HCT116 (cell line): ENCODE measurements at regions of chr20 and their contacts with region 1.

Region 1: GRCh38 chr20:32652739-32653526 is 20.8 kb downstream of the C20orf203 start:
- DNase-seq: peak; percentile 54
- ATAC-seq: peak; percentile 96
- H3K4me3 ChIP-seq: no peak overlapping the region
- H3K27ac ChIP-seq: no peak overlapping the region
- H3K4me1 ChIP-seq: peaks cover 0 to 11% of the 10 kb centered on the region in 2 experiments; a peak in 1 of 4 replicates
- H3K27me3 ChIP-seq: no peaks in the 10 kb centered on the region
- CTCF ChIP-seq: peak; percentile 87 to 91 (median 88)
- POLR2A ChIP-seq: no peak
- RAD21 ChIP-seq: peak; percentile 99

Region 2: GRCh38 chr20:32207626-32208498 is 445.1 kb before region 1 on chr20 and contains the starts of genes PLAGL2 and POFUT1:
- CTCF ChIA-PET with region 1: no interaction called
- POLR2A ChIA-PET with region 1: no interaction called
- RAD21 ChIA-PET with region 1: no interaction called
- intact Hi-C with region 1: loop called (anchors 5 kb)
- DNase-seq: peak; percentile 61
- ATAC-seq: peak; percentile 99
- H3K4me3 ChIP-seq: peak within 1 kb of the TSS; percentile 68 to 100
- H3K27ac ChIP-seq: peak within 1 kb of the TSS; percentile 89
- H3K4me1 ChIP-seq: peaks cover 6 to 27% of the 10 kb centered on the region in 2 experiments; a peak in 3 of 4 replicates
- H3K27me3 ChIP-seq: no peaks in the 10 kb centered on the region
- CTCF ChIP-seq: no peak
- POLR2A ChIP-seq: no peak
- RAD21 ChIP-seq: no peak
- total RNA-seq, gene PLAGL2: 18.3 TPM
- total RNA-seq, gene POFUT1: 34.5 TPM

Region 3: GRCh38 chr20:32336918-32337347 is 316.0 kb before region 1 on chr20:
- CTCF ChIA-PET with region 1: no interaction called
- POLR2A ChIA-PET with region 1: no interaction called
- RAD21 ChIA-PET with region 1: no interaction called
- intact Hi-C with region 1: loop called (anchors 10 kb)
- DNase-seq: no peak
- ATAC-seq: peak; percentile 72
- H3K4me3 ChIP-seq: no peak overlapping the region
- H3K27ac ChIP-seq: no peak overlapping the region
- H3K4me1 ChIP-seq: peaks cover 8 to 15% of the 10 kb centered on the region in 2 experiments
- H3K27me3 ChIP-seq: no peaks in the 10 kb centered on the region
- CTCF ChIP-seq: peak; percentile 25 to 56 (median 51); a peak in 5 of 6 replicates
- POLR2A ChIP-seq: no peak
- RAD21 ChIP-seq: peak; percentile 50

Region 4: DNA sequence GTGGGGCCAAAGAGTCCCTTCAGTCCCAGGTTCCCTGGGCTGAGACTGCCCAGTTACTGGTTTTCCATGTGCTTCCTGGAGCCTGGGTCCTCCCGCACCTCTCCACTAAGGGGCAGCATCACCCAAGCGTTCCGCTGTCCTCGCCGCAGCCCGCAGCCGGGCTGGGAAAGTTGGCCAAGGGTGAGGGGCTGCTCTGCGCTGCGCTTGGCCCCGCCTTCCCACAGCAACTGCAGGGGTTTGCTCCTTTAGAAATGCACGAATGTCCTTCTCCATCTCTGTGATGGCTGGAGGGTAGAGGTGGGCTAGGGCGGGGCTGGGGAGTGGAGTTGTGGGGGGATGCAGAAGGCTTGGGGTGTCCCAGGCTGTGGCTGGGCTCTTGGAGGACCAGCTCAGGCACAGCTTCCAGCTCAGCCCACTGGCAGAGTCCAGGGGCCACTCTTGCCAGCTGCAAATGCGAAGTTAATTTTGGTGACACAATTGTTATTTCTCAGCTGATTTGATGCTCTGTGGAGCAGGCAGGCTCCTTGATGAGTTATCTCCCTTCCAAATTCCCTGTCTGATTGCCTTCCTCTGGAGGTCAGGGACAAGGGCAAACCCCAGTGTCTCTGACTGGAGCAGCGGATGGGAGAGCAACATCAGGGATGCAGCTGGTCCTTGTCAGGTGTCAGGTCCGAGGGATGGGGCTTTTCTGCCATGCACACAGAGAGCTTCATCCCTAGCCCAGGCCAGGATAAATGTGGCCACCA is 131.0 kb before region 1 on chr20:
- CTCF ChIA-PET with region 1: interaction called, 117 read pairs
- POLR2A ChIA-PET with region 1: interaction called, 3 read pairs
- RAD21 ChIA-PET with region 1: interaction called, 16 to 29 read pairs
- intact Hi-C with region 1: loop called (anchors 1 kb)
- DNase-seq: peak; percentile 15
- ATAC-seq: peak; percentile 97
- H3K4me3 ChIP-seq: no peak overlapping the region
- H3K27ac ChIP-seq: no peak overlapping the region
- H3K4me1 ChIP-seq: 0 out of 4 replicates have a peak, but pooled peaks cover 0 to 3% of the 10 kb centered on the region in 2 experiments
- H3K27me3 ChIP-seq: no peaks in the 10 kb centered on the region
- CTCF ChIP-seq: peak; percentile 86 to 93 (median 88)
- POLR2A ChIP-seq: no peak
- RAD21 ChIP-seq: peak; percentile 99